Activated naive CD4-positive, alpha-beta T cell treated with anti-CD3 and anti-CD28 coated beads, Interleukin-2, amount 10 ng/mL, durations not matched to agents 7 days and 5 days (primary cell): ENCODE measurements at regions of chr18 and their contacts with region 1.

Region 1: GRCh38 chr18:4106407-4107033 is 348.6 kb downstream of the DLGAP1 start:
- DNase-seq: peak; percentile 75
- H3K4me3 Mint-ChIP-seq: no peak overlapping the region
- H3K27ac Mint-ChIP-seq: no peak overlapping the region
- H3K4me1 Mint-ChIP-seq: no peaks in the 10 kb centered on the region
- H3K27me3 Mint-ChIP-seq: no peaks in the 10 kb centered on the region

Region 2: GRCh38 chr18:5057386-5058348 is 951.1 kb after region 1 on chr18:
- CTCF ChIA-PET with region 1: interaction called, 73 read pairs
- DNase-seq: peak; percentile 70
- H3K4me3 Mint-ChIP-seq: no peak overlapping the region
- H3K27ac Mint-ChIP-seq: peak overlapping the region; percentile 1
- H3K4me1 Mint-ChIP-seq: peaks cover 20% of the 10 kb centered on the region
- H3K27me3 Mint-ChIP-seq: peaks cover 7% of the 10 kb centered on the region